Lower leg skin (tissue), 4 donors: ENCODE measurements at regions of chr11 and their contacts with region 1.

Region 1: DNA sequence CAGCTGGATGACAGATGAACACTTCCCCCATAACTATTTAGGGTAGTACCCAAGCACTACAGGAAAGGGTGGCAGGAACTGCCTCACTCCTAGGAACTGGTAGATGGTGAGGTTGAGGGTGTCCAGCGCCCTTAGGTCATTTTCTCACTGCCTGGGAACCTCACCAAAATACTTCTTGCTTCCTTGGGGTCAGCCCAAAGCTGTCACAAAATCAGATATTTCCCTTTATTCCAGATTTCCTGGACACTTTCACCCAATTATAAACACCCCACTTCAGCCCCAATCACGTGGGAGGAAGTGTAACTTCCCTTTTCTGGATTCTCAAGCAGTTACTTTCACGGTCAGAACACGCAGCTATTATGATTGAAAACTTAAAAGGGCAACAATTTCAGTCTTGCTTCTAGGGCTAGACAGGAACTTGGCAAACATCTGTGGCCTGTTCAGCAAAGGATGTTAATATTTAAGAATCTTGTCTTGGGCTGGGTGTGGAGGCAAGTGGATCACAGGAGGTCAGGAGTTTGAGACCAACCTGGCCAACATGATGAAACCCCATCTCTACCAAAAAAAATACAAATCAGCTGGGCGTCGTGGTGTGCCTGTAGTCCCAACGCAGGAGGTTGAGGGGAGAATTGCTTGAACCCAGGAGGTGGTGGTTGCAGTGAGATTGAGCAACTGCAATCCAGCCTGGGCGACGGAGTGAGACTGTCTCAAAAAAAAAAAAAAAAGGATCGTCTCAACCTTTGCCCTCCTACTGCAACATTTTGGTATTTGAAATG is 4.0 kb downstream of the FTH1 start:
- DNase-seq: peak in 1 of 2 donors; percentile 78
- H3K4me3 ChIP-seq: no peak overlapping the region
- CTCF ChIP-seq: no peak
- POLR2A ChIP-seq: no peak

Region 2: DNA sequence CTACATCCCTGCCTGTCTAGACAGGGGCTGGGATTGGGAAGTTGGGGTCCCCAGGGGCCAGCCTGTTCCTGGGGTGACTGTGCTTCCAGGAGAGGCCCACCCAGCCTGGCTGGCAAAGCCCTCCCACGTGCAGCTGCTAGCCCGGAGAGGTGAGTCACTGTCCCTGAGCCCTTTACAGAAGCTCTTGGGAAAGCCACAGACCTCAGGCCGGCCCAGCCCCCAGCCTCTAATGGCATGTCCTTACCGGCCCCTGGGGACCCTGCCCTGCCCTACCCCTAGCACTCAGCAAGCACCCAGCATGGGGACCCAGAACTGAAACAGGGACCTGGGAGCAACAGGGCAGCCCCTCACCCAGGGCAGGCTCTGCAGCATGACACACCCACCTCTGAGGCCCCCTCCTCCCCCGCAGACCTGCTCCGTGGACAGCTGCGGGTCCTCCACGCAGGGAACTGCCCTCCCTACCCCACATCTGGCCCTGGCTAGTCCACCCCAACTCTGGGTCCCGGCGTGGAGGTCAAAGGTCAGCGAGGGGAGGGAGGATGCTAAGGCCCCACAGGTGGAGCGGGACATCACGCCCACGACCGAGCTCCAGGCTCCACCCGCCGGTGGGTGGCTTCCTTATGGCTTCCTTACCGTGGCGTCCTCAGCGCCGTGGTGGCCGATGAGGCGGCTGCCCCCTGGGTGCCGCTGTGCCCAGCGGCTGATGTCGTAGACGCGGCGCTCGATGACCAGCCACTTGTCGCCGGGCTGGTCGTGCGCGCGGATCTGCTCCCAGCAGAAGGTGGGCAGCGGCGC is 72.7 kb before region 1 on chr11:
- intact Hi-C with region 1: no loop called
- DNase-seq: peak; percentile 36 to 94
- H3K4me3 ChIP-seq: peak overlapping the region; percentile 50
- CTCF ChIP-seq: no peak
- POLR2A ChIP-seq: no peak

Region 3: GRCh38 chr11:61923166-61924063 is 40.1 kb before region 1 on chr11:
- intact Hi-C with region 1: loop called (anchors 1 kb)
- DNase-seq: peak; percentile 90 to 97
- H3K4me3 ChIP-seq: no peak overlapping the region
- CTCF ChIP-seq: no peak
- POLR2A ChIP-seq: no peak